ENCODE measurements at regions of chr4 and their contacts with region 1.

Region 1: DNA sequence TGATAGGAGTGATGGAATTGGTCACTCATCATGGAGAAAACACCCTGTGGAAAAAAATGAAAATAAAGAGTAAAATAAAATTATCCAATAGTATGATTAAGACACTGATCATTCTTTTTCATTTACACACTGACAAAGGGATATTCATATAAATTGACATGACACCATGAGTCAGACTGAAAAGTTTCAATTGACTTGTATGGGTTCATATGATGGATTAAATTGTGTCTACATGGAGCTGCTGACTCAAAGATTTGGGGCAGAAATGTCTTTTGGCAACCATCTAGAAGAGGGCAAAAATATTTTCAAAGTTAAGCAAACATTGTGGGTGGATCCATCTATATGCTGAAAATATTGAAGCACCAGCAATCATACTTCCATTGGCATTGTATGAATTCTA is 153.4 kb upstream of the PPP3CA start:
- DNase-seq: no peak
- ATAC-seq: no peak
- H3K4me3 ChIP-seq: no peak overlapping the region
- H3K4me3 Mint-ChIP-seq: no peak overlapping the region
- H3K27ac ChIP-seq: no peak overlapping the region
- H3K27ac Mint-ChIP-seq: no peak overlapping the region
- H3K4me1 ChIP-seq: no peaks in the 10 kb centered on the region
- H3K4me1 Mint-ChIP-seq: no peaks in the 10 kb centered on the region
- H3K27me3 ChIP-seq: no peaks in the 10 kb centered on the region
- H3K27me3 Mint-ChIP-seq: peaks cover 4% of the 10 kb centered on the region
- CTCF ChIP-seq: no peak

Region 2: GRCh38 chr4:101328063-101328602 is 172.6 kb before region 1 on chr4:
- CTCF ChIA-PET with region 1: no interaction called
- POLR2A ChIA-PET with region 1: no interaction called
- intact Hi-C with region 1: no loop called
- DNase-seq: peak in 3 of 9 experiments; percentile 27 to 84 (median 70)
- ATAC-seq: peak; percentile 84
- H3K4me3 ChIP-seq: peak overlapping the region; percentile 15
- H3K4me3 Mint-ChIP-seq: peak overlapping the region; percentile 70
- H3K27ac ChIP-seq: peak overlapping the region; percentile 20 to 71
- H3K27ac Mint-ChIP-seq: peak overlapping the region; percentile 91
- H3K4me1 ChIP-seq: peaks cover 28% of the 10 kb centered on the region
- H3K4me1 Mint-ChIP-seq: peaks cover 68% of the 10 kb centered on the region
- H3K27me3 ChIP-seq: no peaks in the 10 kb centered on the region
- H3K27me3 Mint-ChIP-seq: no peaks in the 10 kb centered on the region
- CTCF ChIP-seq: no peak

Region 3: GRCh38 chr4:101540336-101540735 is 39.6 kb after region 1 on chr4:
- CTCF ChIA-PET with region 1: no interaction called
- POLR2A ChIA-PET with region 1: no interaction called
- intact Hi-C with region 1: loop called in 1 of 2 experiments (anchors 5 kb)
- DNase-seq: no peak
- ATAC-seq: no peak
- H3K4me3 ChIP-seq: no peak overlapping the region
- H3K4me3 Mint-ChIP-seq: no peak overlapping the region
- H3K27ac ChIP-seq: no peak overlapping the region
- H3K27ac Mint-ChIP-seq: no peak overlapping the region
- H3K4me1 ChIP-seq: no peaks in the 10 kb centered on the region
- H3K4me1 Mint-ChIP-seq: no peaks in the 10 kb centered on the region
- H3K27me3 ChIP-seq: no peaks in the 10 kb centered on the region
- H3K27me3 Mint-ChIP-seq: peaks cover 10% of the 10 kb centered on the region
- CTCF ChIP-seq: no peak